Caco-2 (cell line): ENCODE measurements at regions of chrX and their contacts with region 1.

Region 1: DNA sequence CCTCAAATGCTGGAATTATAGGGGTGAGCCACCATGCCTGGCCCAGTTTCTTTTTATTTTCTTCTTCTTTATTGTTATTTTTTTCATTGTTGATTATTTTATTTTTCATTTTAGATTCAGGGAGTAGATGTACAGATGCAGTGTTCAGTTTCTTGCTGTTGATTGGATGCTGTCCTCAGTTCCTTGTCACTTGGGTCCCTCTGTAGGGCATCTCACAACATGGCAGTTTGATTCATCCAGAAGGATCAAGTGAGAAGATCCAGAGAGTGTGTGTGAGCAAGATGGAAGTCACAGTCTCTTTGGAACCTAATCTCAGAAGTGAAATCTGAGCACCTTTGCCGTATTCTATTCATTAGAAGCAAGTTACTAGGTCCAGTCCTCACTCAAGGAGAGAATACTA is 20.9 kb downstream of the HMGB3 start:
- DNase-seq: no peak
- H3K4me3 ChIP-seq: no peak overlapping the region
- H3K4me3 Mint-ChIP-seq: no peak overlapping the region
- H3K27ac Mint-ChIP-seq: no peak overlapping the region
- H3K4me1 ChIP-seq: no peaks in the 10 kb centered on the region
- H3K4me1 Mint-ChIP-seq: no peaks in the 10 kb centered on the region
- H3K27me3 ChIP-seq: no peaks in the 10 kb centered on the region
- H3K27me3 Mint-ChIP-seq: no peaks in the 10 kb centered on the region
- CTCF ChIP-seq: peak in 1 of 2 experiments; percentile 34

Region 2: GRCh38 chrX:150772150-150772970 is 231.7 kb before region 1 on chrX:
- CTCF ChIA-PET with region 1: interaction called, 3 read pairs
- POLR2A ChIA-PET with region 1: no interaction called
- intact Hi-C with region 1: loop called (anchors 1 kb)
- DNase-seq: peak; percentile 67 to 80
- H3K4me3 ChIP-seq: no peak overlapping the region
- H3K4me3 Mint-ChIP-seq: no peak overlapping the region
- H3K27ac Mint-ChIP-seq: no peak overlapping the region
- H3K4me1 ChIP-seq: no peaks in the 10 kb centered on the region
- H3K4me1 Mint-ChIP-seq: no peaks in the 10 kb centered on the region
- H3K27me3 ChIP-seq: no peaks in the 10 kb centered on the region
- H3K27me3 Mint-ChIP-seq: no peaks in the 10 kb centered on the region
- CTCF ChIP-seq: peak; percentile 73 to 83

Region 3: DNA sequence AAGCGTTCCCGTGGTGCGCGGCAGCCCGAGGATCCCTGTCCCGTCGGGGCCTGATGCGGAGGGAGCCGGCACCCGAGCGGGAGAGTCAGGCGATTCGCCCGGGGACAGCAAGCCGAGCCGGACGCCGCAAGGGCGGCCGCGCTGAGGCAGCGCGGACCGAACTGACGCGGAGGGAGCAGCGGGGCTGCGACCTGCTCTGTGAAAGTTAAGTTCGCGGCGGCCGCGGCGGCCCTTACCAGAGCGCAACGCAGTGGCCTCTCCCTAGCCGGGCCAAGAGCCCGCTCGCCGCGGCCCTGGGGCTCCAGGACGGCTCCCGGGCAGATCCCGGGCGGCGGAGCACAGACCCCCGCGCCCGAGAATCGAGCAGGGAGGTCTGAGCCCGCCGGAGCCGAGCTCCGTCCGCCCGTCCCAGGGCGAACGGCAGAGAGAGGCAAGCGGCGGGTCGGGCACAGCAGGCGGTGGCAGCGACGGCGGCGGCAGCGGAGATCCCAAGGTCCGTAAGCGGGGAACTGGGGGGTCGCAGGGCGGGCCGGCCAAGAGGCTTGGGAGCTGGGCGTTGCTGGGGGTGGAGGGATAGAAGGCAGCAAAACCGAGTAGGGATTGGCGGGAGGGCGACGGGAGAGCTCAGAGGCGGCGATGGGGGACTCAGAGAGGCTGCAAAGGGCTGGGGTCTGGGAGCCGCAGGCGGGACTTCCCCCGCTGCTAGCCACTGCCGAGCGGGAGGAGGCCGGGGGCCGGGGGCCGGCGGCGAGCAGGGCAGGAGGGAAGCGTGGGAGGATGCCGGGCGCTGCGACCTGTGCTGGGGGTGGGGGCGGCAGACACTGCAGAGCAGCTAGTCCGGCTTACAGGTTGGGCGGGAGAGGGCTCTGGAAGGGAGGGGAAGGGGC is 173.3 kb after region 1 on chrX:
- CTCF ChIA-PET with region 1: no interaction called
- POLR2A ChIA-PET with region 1: no interaction called
- intact Hi-C with region 1: no loop called
- DNase-seq: no peak
- H3K4me3 ChIP-seq: no peak overlapping the region
- H3K4me3 Mint-ChIP-seq: no peak overlapping the region
- H3K27ac Mint-ChIP-seq: no peak overlapping the region
- H3K4me1 ChIP-seq: no peaks in the 10 kb centered on the region
- H3K4me1 Mint-ChIP-seq: no peaks in the 10 kb centered on the region
- H3K27me3 ChIP-seq: no peaks in the 10 kb centered on the region
- H3K27me3 Mint-ChIP-seq: peaks cover 9% of the 10 kb centered on the region
- CTCF ChIP-seq: no peak